ENCODE measurements at regions of chr4 and their contacts with region 1.

Region 1: GRCh38 chr4:41882625-41883347 is 52.4 kb upstream of the TMEM33 start:
- DNase-seq: peak; percentile 49
- H3K4me3 Mint-ChIP-seq: peak overlapping the region; percentile 60
- H3K27ac Mint-ChIP-seq: no peak overlapping the region
- H3K4me1 Mint-ChIP-seq: no peaks in the 10 kb centered on the region
- H3K27me3 Mint-ChIP-seq: peaks cover 24% of the 10 kb centered on the region
- CTCF ChIP-seq: peak; percentile 70

Region 2: GRCh38 chr4:41281038-41281634 is 601.6 kb before region 1 on chr4:
- CTCF ChIA-PET with region 1: no interaction called
- intact Hi-C with region 1: no loop called
- DNase-seq: peak; percentile 53
- H3K4me3 Mint-ChIP-seq: no peak overlapping the region
- H3K27ac Mint-ChIP-seq: no peak overlapping the region
- H3K4me1 Mint-ChIP-seq: peaks cover 13% of the 10 kb centered on the region
- H3K27me3 Mint-ChIP-seq: no peaks in the 10 kb centered on the region
- CTCF ChIP-seq: peak; percentile 37

Region 3: GRCh38 chr4:41692717-41693345 is 190.0 kb before region 1 on chr4:
- CTCF ChIA-PET with region 1: no interaction called
- intact Hi-C with region 1: loop called (anchors 1 kb)
- DNase-seq: peak; percentile 49
- H3K4me3 Mint-ChIP-seq: no peak overlapping the region
- H3K27ac Mint-ChIP-seq: no peak overlapping the region
- H3K4me1 Mint-ChIP-seq: no peaks in the 10 kb centered on the region
- H3K27me3 Mint-ChIP-seq: no peaks in the 10 kb centered on the region
- CTCF ChIP-seq: peak; percentile 69

Region 4: DNA sequence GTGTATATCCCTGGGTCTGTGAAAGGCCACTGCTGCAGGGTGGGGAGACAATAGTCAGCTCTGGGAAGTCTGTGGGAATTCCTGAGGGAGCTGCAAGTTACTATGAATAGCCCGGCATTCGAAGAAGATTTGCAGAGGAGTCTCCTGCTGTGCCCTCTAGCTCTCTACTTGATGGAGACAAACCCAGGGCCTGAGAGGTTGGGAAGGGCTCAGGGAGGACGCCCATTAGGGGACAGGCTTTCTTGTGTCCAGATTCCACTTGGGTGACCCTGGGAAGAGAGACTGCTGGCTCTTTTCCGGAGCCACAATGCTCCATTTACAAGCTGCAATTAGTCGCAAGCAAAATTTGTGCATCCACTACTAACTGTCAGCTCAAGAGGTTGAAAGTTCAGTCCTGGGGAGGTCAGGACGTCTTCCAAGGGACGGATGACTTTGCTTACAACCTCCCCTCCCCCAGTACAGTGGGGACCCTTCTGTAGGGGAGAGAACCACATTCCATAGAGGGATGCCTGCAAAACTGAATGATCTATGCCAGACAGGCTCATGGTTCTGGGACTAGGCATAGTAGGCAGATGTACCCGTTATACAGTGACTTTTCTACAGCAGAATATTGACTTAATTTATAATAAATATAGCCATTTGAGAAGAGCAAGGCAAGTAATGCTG is 86.1 kb before region 1 on chr4:
- CTCF ChIA-PET with region 1: no interaction called
- intact Hi-C with region 1: loop called (anchors 10 kb)
- DNase-seq: no peak
- H3K4me3 Mint-ChIP-seq: no peak overlapping the region
- H3K27ac Mint-ChIP-seq: no peak overlapping the region
- H3K4me1 Mint-ChIP-seq: peaks cover 20% of the 10 kb centered on the region
- H3K27me3 Mint-ChIP-seq: peaks cover 22% of the 10 kb centered on the region
- CTCF ChIP-seq: no peak

Measured in Calu3 (cell line).